Gastrocnemius medialis (tissue), 4 donors: ENCODE measurements at regions of chr19 and their contacts with region 1.

Region 1: DNA sequence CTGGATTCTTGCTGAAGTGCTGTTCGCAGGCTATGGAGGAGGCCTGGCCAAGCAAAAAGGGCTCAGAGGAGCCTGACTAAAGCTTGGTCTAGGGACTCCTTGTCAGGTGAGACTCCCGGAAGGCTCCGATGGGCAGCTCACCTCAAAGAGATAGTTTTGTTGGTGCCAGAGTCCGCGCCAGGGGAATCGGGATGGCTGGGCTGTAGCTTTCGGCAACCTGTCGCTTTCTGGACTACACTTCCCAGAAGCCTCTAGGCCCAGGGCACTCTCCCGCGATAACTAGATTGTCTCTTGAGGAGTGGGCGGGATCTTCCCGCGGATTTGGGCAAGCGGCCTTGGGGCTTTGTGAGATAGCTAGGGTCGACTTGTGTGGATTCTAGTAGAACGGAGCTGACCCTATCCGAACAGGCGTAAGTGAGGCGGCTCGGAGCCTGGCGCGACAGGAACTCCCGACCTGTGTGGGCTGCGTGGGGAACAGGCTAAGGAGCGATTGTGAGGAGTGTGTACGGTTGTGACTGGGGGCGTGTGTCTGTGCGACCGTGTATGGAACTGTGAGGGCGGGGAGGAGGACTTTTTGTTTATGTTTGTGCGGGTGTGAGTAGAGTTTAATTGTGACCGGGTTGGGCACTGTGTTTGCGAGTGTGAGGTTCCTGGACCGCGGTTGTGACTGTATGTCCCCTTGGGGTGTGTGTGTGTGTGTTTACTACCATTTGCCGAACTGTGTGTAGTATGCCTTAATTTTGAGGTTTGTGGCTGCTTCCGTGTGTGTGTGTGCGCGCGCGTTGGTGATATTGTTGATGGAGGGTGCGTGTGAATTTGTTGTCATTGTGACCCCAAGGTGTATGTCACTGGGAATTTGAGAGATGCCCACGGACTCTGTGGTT is at the start of gene ZNF345:
- DNase-seq: peak; percentile 85 to 87
- ATAC-seq: peak; percentile 98 to 99
- H3K4me3 ChIP-seq: peak within 1 kb of the TSS; percentile 87 to 95 (median 92)
- H3K27ac ChIP-seq: peak within 1 kb of the TSS; percentile 87 to 98 (median 94)
- H3K4me1 ChIP-seq: peaks cover 11 to 14% of the 10 kb centered on the region in 2 donors
- H3K27me3 ChIP-seq: no peaks in the 10 kb centered on the region
- CTCF ChIP-seq: no peak
- POLR2A ChIP-seq: peak; percentile 22 to 25
- total RNA-seq, gene ZNF345: 0.36 to 3.9 (median 0.51) TPM

Region 2: GRCh38 chr19:36528194-36528920 is 322.4 kb before region 1 on chr19 and contains the start of gene ZNF260:
- in situ Hi-C with region 1: no loop called
- intact Hi-C with region 1: loop called (anchors 2 kb)
- DNase-seq: peak; percentile 96
- ATAC-seq: peak; percentile 99
- H3K4me3 ChIP-seq: peak within 1 kb of the TSS; percentile 71 to 83 (median 80)
- H3K27ac ChIP-seq: peak within 1 kb of the TSS; percentile 83 to 94 (median 90)
- H3K4me1 ChIP-seq: peaks cover 16 to 17% of the 10 kb centered on the region in 2 donors
- H3K27me3 ChIP-seq: no peaks in the 10 kb centered on the region
- CTCF ChIP-seq: no peak
- POLR2A ChIP-seq: peak; percentile 43 to 56
- total RNA-seq, gene ZNF260: 1.3 to 16.3 (median 3.2) TPM

Region 3: GRCh38 chr19:36665832-36666231 is 185.0 kb before region 1 on chr19:
- in situ Hi-C with region 1: no loop called
- intact Hi-C with region 1: loop called (anchors 2 kb)
- DNase-seq: no peak
- ATAC-seq: no peak
- H3K4me3 ChIP-seq: peak overlapping the region; percentile 82 to 97 (median 92)
- H3K27ac ChIP-seq: no peak overlapping the region
- H3K4me1 ChIP-seq: peaks cover 6 to 9% of the 10 kb centered on the region in 2 donors
- H3K27me3 ChIP-seq: no peaks in the 10 kb centered on the region
- CTCF ChIP-seq: no peak
- POLR2A ChIP-seq: no peak

Region 4: GRCh38 chr19:36772311-36773222 is 78.2 kb before region 1 on chr19 and contains the start of gene ZNF850:
- in situ Hi-C with region 1: no loop called
- intact Hi-C with region 1: loop called (anchors 1 kb)
- DNase-seq: peak; percentile 82 to 83
- ATAC-seq: peak; percentile 97 to 98
- H3K4me3 ChIP-seq: peak within 1 kb of the TSS; percentile 71 to 98 (median 86)
- H3K27ac ChIP-seq: peak within 1 kb of the TSS; percentile 74 to 89 (median 84)
- H3K4me1 ChIP-seq: peaks cover 11 to 20% of the 10 kb centered on the region in 2 donors
- H3K27me3 ChIP-seq: peaks cover 0 to 4% (median 0%) of the 10 kb centered on the region in 3 donors
- CTCF ChIP-seq: no peak
- POLR2A ChIP-seq: peak in 1 of 2 donors; percentile 30
- total RNA-seq, gene ZNF850: 0.24 to 0.55 (median 0.42) TPM

Region 5: GRCh38 chr19:36915992-36916830 is 65.4 kb after region 1 on chr19 and contains the starts of genes ZNF568 and ZNF829:
- in situ Hi-C with region 1: no loop called
- intact Hi-C with region 1: loop called (anchors 1 kb)
- DNase-seq: peak; percentile 76 to 79
- ATAC-seq: peak; percentile 98
- H3K4me3 ChIP-seq: peak within 1 kb of the TSS; percentile 82 to 98 (median 83)
- H3K27ac ChIP-seq: peak within 1 kb of the TSS; percentile 92 to 97 (median 94)
- H3K4me1 ChIP-seq: peaks cover 8 to 12% of the 10 kb centered on the region in 2 donors
- H3K27me3 ChIP-seq: no peaks in the 10 kb centered on the region
- CTCF ChIP-seq: peak; percentile 32 to 64 (median 46)
- POLR2A ChIP-seq: peak in 1 of 2 donors; percentile 12
- total RNA-seq, gene ZNF568: 3.0 to 10.2 (median 5.4) TPM
- total RNA-seq, gene ZNF829: 0.97 to 1.5 (median 1.2) TPM

Region 6: DNA sequence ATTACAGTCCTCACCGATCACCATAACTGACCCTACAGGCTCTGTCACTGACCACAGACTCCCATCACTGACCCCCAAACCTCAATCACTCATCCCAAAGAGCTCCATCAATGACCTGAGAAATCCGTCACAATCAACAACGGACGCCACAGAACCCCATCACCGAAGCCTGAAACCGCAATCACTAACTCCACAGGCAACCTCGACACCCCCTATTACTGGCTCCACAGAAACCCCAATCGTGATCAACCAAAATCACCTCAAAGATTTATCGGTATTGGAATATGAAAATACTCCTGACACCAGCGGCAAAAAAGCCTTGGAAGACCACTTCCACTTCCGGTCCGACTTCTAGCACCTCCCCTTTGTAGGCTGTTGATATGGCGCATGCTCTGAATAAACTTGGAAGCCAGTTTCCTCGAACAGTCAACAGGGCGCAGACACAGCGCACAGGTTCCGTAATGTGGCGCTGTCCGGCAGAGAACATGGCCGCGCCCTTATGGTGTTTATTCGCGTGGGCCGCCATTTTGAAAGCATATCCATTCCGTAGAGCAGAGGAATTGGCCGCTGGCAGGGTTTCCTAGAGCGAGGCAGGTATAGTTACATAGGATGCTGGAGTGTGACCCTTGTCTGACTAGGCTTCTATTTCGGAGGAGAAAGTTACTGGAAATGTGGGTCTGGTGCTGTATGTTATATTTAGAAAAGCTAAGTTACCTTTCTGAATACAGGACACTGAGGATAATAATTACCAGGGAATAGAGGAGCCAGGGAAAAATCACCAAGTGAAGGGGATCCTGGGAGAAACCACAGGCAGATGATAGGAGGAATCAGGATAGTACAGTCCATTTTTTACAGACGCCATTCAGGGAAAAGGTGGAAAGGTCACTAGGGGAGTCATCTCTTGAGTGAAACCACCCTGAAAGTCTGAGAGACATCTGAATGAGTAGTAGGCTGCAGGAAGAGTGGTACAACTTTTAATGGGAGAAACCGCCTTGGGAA is 321.9 kb after region 1 on chr19 and contains the start of gene ZNF585A:
- in situ Hi-C with region 1: no loop called
- intact Hi-C with region 1: no loop called
- DNase-seq: peak; percentile 90 to 93
- ATAC-seq: peak; percentile 100
- H3K4me3 ChIP-seq: peak within 1 kb of the TSS; percentile 74 to 85 (median 80)
- H3K27ac ChIP-seq: peak within 1 kb of the TSS; percentile 80 to 90 (median 84)
- H3K4me1 ChIP-seq: peaks cover 7 to 12% of the 10 kb centered on the region in 2 donors
- H3K27me3 ChIP-seq: no peaks in the 10 kb centered on the region
- CTCF ChIP-seq: peak in 2 of 5 experiments; percentile 21 to 32
- POLR2A ChIP-seq: peak in 1 of 2 donors; percentile 14
- total RNA-seq, gene ZNF585A: 2.0 to 10.5 (median 6.0) TPM

Region 7: GRCh38 chr19:37217855-37218591 is 367.2 kb after region 1 on chr19 and contains the start of gene ZNF383:
- in situ Hi-C with region 1: no loop called
- intact Hi-C with region 1: loop called (anchors 10 kb)
- DNase-seq: peak; percentile 81 to 83
- ATAC-seq: peak; percentile 95 to 96
- H3K4me3 ChIP-seq: peak within 1 kb of the TSS; percentile 82 to 92 (median 88)
- H3K27ac ChIP-seq: peak within 1 kb of the TSS; percentile 89 to 93 (median 91)
- H3K4me1 ChIP-seq: peaks cover 3 to 11% of the 10 kb centered on the region in 2 donors
- H3K27me3 ChIP-seq: no peaks in the 10 kb centered on the region
- CTCF ChIP-seq: no peak
- POLR2A ChIP-seq: peak; percentile 7 to 38
- total RNA-seq, gene ZNF383: 2.3 to 8.4 (median 4.0) TPM

Region 8: DNA sequence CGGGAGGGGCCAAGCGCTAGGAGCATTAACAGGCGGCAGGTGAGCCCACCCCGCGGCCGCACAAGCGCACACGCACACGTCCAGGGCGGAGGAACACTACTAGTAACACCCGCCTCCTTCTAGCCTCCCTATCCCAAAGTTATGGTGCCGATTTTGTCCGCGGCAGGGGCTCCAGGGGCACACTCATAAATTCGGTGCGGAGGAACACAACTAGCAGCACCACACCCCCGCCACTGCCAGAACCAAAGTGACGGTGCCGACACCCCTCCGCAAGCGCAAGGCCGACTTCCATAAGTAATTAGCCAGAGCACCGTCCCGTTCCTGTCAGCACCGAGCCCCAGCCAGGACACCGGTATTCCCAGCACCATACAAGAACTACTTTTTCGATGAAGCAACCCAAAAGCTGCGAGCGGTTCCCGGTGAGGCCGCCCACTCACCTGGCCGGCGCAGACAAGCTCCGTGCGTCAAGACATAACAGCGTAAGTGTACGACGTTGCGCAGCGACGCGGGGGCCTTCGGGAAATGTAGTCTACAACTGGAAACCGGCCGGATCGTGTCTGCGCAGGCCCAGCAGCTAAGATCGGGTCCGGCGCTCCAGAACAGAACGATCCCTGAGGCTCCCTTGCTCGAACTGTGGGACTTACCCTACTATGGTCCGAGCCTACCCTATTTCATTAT is 743.6 kb after region 1 on chr19 and contains the starts of genes ZNF540 and ZNF571:
- in situ Hi-C with region 1: no loop called
- intact Hi-C with region 1: loop called (anchors 10 kb)
- DNase-seq: peak; percentile 85 to 89
- ATAC-seq: peak; percentile 98 to 99
- H3K4me3 ChIP-seq: peak within 1 kb of the TSS; percentile 78 to 95 (median 86)
- H3K27ac ChIP-seq: peak within 1 kb of the TSS; percentile 87 to 95 (median 90)
- H3K4me1 ChIP-seq: peaks cover 17 to 19% of the 10 kb centered on the region in 2 donors
- H3K27me3 ChIP-seq: no peaks in the 10 kb centered on the region
- CTCF ChIP-seq: no peak
- POLR2A ChIP-seq: peak; percentile 61 to 63
- total RNA-seq, gene ZNF540: 0.46 to 1.5 (median 1.3) TPM
- total RNA-seq, gene ZNF571: 1.5 to 2.5 (median 1.8) TPM